ENCODE measurements at regions of chr2 and their contacts with region 1.

Region 1: DNA sequence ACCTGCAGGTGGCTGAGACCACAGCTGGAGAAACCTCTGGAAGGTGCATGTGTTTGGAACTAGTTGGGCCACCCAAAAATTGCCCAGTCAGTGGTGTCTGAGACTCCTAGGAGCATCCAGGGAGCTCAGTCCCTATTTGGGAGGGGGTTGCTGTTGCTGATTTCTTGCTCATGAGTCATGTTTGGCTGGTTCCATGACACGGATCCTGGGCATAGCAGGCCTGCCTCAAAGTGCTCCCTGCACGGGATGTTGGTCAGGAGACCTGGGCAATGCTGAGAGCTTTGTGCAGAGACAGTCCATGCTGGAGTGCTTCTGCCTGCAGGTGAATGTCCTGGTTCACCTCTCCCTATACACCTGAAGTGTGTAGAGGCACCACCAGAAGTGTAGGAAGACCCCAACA is 194.2 kb downstream of the GLI2 start:
- DNase-seq: no peak
- H3K4me3 ChIP-seq: no peak overlapping the region
- H3K27ac ChIP-seq: no peak overlapping the region
- H3K4me1 ChIP-seq: no peaks in the 10 kb centered on the region
- H3K27me3 ChIP-seq: no peaks in the 10 kb centered on the region
- CTCF ChIP-seq: no peak
- POLR2A ChIP-seq: no peak

Region 2: GRCh38 chr2:120576509-120577474 is 353.0 kb before region 1 on chr2:
- intact Hi-C with region 1: no loop called
- DNase-seq: peak; percentile 57 to 77
- H3K4me3 ChIP-seq: peak overlapping the region; percentile 23 to 62 (median 42)
- H3K27ac ChIP-seq: peak overlapping the region; percentile 81 to 82
- H3K4me1 ChIP-seq: peaks cover 0 to 7% of the 10 kb centered on the region in 2 donors
- H3K27me3 ChIP-seq: no peaks in the 10 kb centered on the region
- CTCF ChIP-seq: peak in 2 of 3 donors; percentile 15 to 35
- POLR2A ChIP-seq: no peak

Region 3: GRCh38 chr2:120605231-120605935 is 324.4 kb before region 1 on chr2:
- intact Hi-C with region 1: no loop called
- DNase-seq: no peak
- H3K4me3 ChIP-seq: no peak overlapping the region
- H3K27ac ChIP-seq: no peak overlapping the region
- H3K4me1 ChIP-seq: no peaks in the 10 kb centered on the region
- H3K27me3 ChIP-seq: no peaks in the 10 kb centered on the region
- CTCF ChIP-seq: no peak
- POLR2A ChIP-seq: no peak

Region 4: GRCh38 chr2:120914839-120915521 is 14.8 kb before region 1 on chr2:
- intact Hi-C with region 1: loop called (anchors 2 kb)
- DNase-seq: peak in 1 of 2 donors; percentile 56
- H3K4me3 ChIP-seq: no peak overlapping the region
- H3K27ac ChIP-seq: peak overlapping the region; percentile 37 to 45
- H3K4me1 ChIP-seq: peaks cover 0 to 10% of the 10 kb centered on the region in 2 donors
- H3K27me3 ChIP-seq: no peaks in the 10 kb centered on the region
- CTCF ChIP-seq: no peak
- POLR2A ChIP-seq: no peak

Region 5: DNA sequence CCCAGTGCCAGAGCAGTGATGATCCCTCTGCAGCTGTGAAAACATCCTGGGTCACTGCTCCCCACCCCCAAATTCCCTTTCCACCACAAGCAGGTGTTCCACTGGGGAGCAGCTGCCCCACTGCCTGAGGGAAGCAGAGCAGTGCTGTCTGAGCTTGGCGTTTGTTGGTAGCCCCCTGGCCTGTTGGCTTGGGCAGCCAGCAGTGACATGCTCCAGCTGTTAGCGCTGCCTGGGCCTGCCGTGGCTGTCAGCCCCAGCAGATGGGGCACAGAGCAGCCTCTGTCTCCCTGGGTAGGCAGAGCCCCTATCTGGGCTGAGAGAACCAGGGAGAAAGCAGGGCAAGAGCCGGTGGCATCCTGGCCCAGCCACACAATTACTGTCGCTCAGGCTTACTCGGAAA is 53.5 kb after region 1 on chr2:
- intact Hi-C with region 1: no loop called
- DNase-seq: no peak
- H3K4me3 ChIP-seq: no peak overlapping the region
- H3K27ac ChIP-seq: peak overlapping the region in 1 of 2 donors; percentile 7
- H3K4me1 ChIP-seq: no peaks in the 10 kb centered on the region
- H3K27me3 ChIP-seq: no peaks in the 10 kb centered on the region
- CTCF ChIP-seq: no peak
- POLR2A ChIP-seq: no peak

Measured in breast epithelium (tissue), 4 donors.